CD4-positive, alpha-beta T cell (primary cell): ENCODE measurements at regions of chr10 and their contacts with region 1.

Region 1: GRCh38 chr10:35501921-35502320 is 103.2 kb upstream of the GJD4 start:
- DNase-seq: no peak
- ATAC-seq: no peak
- H3K4me3 ChIP-seq: no peak overlapping the region
- H3K4me3 Mint-ChIP-seq: no peak overlapping the region
- H3K27ac ChIP-seq: no peak overlapping the region
- H3K27ac Mint-ChIP-seq: no peak overlapping the region
- H3K4me1 ChIP-seq: peaks cover 8% of the 10 kb centered on the region
- H3K4me1 Mint-ChIP-seq: peaks cover 60% of the 10 kb centered on the region
- H3K27me3 ChIP-seq: no peaks in the 10 kb centered on the region
- H3K27me3 Mint-ChIP-seq: no peaks in the 10 kb centered on the region
- CTCF ChIP-seq: no peak

Region 2: GRCh38 chr10:34985823-34986222 is 516.1 kb before region 1 on chr10:
- CTCF ChIA-PET with region 1: no interaction called
- POLR2A ChIA-PET with region 1: no interaction called
- intact Hi-C with region 1: no loop called
- DNase-seq: no peak
- ATAC-seq: no peak
- H3K4me3 ChIP-seq: no peak overlapping the region
- H3K4me3 Mint-ChIP-seq: no peak overlapping the region
- H3K27ac ChIP-seq: no peak overlapping the region
- H3K27ac Mint-ChIP-seq: no peak overlapping the region
- H3K4me1 ChIP-seq: no peaks in the 10 kb centered on the region
- H3K4me1 Mint-ChIP-seq: no peaks in the 10 kb centered on the region
- H3K27me3 ChIP-seq: no peaks in the 10 kb centered on the region
- H3K27me3 Mint-ChIP-seq: no peaks in the 10 kb centered on the region
- CTCF ChIP-seq: no peak

Region 3: DNA sequence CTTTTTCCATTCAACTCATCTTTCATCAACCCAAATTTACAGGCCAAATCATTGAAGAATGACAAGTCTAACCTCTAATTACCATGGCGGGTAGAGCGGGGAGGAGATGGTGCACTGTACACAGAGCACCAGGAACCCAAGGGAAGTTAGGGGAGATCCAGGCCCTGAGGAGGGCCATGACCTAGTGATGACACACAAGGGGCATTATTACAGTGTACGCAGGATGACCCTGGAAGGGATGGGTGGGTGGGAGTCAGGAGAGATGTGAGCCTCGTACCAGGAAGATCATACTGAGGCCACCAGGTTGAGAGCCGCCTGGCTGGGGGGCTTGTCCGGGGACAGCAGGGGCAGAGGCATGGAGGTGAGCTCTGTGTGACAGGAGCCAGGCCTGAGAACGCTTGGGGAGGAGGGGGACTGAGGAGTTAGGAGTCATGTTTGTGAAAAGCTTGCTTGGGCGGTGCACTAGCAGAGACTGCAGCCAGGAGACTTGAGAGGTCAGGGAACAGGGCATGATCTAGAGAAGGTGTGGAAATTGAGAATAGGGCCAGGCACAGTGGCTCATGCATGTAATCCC is 255.1 kb before region 1 on chr10:
- CTCF ChIA-PET with region 1: no interaction called
- POLR2A ChIA-PET with region 1: no interaction called
- intact Hi-C with region 1: loop called (anchors 10 kb)
- DNase-seq: no peak
- ATAC-seq: no peak
- H3K4me3 ChIP-seq: no peak overlapping the region
- H3K4me3 Mint-ChIP-seq: no peak overlapping the region
- H3K27ac ChIP-seq: no peak overlapping the region
- H3K27ac Mint-ChIP-seq: no peak overlapping the region
- H3K4me1 ChIP-seq: no peaks in the 10 kb centered on the region
- H3K4me1 Mint-ChIP-seq: no peaks in the 10 kb centered on the region
- H3K27me3 ChIP-seq: no peaks in the 10 kb centered on the region
- H3K27me3 Mint-ChIP-seq: peaks cover 9% of the 10 kb centered on the region
- CTCF ChIP-seq: no peak